HepG2 (cell line): ENCODE measurements at regions of chr2 and their contacts with region 1.

Region 1: DNA sequence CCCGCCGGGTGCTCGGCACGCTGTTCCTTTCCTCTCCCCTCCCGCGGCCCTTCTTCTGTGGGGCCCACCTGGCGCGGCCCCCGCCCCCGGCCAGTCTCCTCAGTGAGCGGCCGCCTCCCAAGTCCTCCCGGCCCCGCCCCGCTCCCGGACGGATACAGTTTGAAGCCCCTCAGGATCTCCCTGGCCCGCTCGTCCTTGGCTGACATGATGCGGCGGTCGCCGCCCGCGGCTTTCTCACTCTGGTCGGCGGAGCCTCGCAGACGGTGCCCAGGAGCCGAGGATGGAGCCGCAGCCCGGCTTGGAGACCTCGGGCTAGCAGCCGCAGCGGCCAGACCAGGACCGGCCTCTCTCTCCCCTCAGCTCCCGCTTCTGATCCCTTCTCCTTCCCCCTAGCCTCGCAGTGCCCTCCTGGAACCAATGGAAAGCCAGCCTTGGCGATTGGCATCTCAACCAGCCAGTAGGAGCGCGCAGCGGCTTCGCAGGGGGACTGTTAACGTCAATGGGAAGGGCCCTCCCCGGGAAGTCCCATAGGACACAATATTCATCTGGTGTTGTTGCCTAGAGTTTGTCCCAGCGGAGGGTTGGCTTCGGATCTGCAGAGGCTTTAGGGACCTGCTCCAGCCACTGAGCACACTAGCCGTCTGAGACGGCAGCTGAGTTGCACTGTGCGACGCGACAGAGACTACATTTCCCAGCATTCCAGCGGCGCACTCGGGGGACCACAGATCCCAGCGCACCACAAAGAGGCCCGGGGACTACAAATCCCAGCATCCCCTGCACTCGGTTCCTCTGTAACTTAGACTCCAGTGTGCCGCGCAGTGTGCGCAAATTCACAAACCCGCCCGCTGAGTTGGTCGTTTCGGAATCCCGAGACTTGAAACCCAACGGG is at the start of gene PDE6D:
- DNase-seq: peak; percentile 97
- ATAC-seq: peak; percentile 97
- H3K4me3 ChIP-seq: peak within 1 kb of the TSS; percentile 70 to 92 (median 88)
- H3K27ac ChIP-seq: peak within 1 kb of the TSS; percentile 65
- H3K4me1 ChIP-seq: peaks cover 51% of the 10 kb centered on the region
- H3K27me3 ChIP-seq: no peaks in the 10 kb centered on the region; a peak in 1 of 5 replicates
- CTCF ChIP-seq: peak; percentile 16
- EP300 ChIP-seq: no peak
- POLR2A ChIP-seq: peak; percentile 76 to 94
- RAD21 ChIP-seq: peak; percentile 29; the same call in 1 of the 2 replicates
- total RNA-seq, gene PDE6D: 14.1 and 22.6 TPM in 2 replicates

Region 2: GRCh38 chr2:231612179-231613053 is 168.7 kb before region 1 on chr2:
- CTCF ChIA-PET with region 1: interaction called, 3 read pairs
- POLR2A ChIA-PET with region 1: no interaction called
- in situ Hi-C with region 1: no loop called
- intact Hi-C with region 1: loop called (anchors 2 kb)
- DNase-seq: peak; percentile 80
- ATAC-seq: peak; percentile 72
- H3K4me3 ChIP-seq: peak overlapping the region in 1 of 3 experiments; percentile 45; a peak in 2 of 6 replicates
- H3K27ac ChIP-seq: peak overlapping the region; percentile 28
- H3K4me1 ChIP-seq: peaks cover 62% of the 10 kb centered on the region
- H3K27me3 ChIP-seq: peaks cover 3 to 8% of the 10 kb centered on the region in 2 experiments; a peak in 2 of 5 replicates
- CTCF ChIP-seq: peak; percentile 96
- EP300 ChIP-seq: no peak
- POLR2A ChIP-seq: no peak
- RAD21 ChIP-seq: peak; percentile 91

Region 3: DNA sequence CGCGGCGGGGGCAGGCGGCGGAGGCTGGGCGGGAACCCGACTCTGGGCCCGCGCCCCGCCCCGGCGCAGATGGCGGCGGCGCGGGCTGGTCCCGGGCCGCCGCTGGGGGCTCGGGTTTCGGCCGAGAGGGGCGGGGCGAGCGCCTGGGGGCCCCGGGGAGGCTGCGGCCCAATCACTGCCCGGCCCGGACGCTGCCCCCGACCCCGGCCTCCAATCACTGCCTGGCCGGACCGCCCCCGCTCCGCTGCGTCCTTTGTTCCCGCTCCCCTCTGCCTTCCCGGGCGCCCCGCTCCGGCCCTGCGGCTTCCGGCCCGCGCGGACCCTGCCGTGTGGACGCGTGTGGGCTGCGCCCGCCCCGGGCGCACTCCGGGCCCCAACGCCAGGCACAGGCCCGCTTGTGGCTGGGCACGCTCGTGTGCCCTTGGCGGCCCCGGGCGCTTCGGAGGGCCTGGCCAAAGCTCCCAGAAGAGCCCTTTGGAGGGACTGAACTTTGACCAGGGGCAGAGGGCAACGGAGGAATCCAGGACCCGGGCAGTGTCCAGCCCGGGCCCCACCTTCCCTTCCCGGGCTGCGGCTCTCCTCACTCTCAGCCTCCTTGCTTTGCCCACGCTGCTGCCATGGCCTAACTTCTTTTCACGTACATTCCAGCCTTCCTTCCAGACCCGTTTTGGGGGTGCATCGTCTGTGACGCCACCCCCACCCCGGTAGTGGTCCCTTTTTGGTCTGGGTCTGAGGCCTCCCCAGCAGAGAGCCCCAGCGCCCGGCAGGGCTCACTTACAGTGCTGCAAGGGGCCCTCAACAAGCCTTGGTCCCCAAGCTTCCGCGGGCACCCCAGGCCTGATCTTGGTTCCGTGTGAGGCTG is 99.9 kb before region 1 on chr2:
- CTCF ChIA-PET with region 1: interaction called, 3 read pairs
- POLR2A ChIA-PET with region 1: interaction called, 8 read pairs
- in situ Hi-C with region 1: no loop called
- intact Hi-C with region 1: loop called (anchors 2 kb)
- DNase-seq: peak; percentile 87
- ATAC-seq: peak; percentile 83
- H3K4me3 ChIP-seq: peak overlapping the region; percentile 63 to 82 (median 66)
- H3K27ac ChIP-seq: peak overlapping the region; percentile 98
- H3K4me1 ChIP-seq: peaks cover 64% of the 10 kb centered on the region
- H3K27me3 ChIP-seq: peaks cover 0 to 10% of the 10 kb centered on the region in 2 experiments; a peak in 1 of 5 replicates
- CTCF ChIP-seq: peak; percentile 11; the same call in 1 of the 2 replicates
- EP300 ChIP-seq: no peak; a peak in 1 of 4 replicates
- POLR2A ChIP-seq: peak in 1 of 2 experiments; percentile 93; a peak in 2 of 4 replicates
- RAD21 ChIP-seq: peak; percentile 77

Region 4: GRCh38 chr2:231720987-231721966 is 59.9 kb before region 1 on chr2:
- CTCF ChIA-PET with region 1: no interaction called
- POLR2A ChIA-PET with region 1: no interaction called
- in situ Hi-C with region 1: no loop called
- intact Hi-C with region 1: loop called (anchors 2 kb)
- DNase-seq: no peak
- ATAC-seq: peak; percentile 30
- H3K4me3 ChIP-seq: no peak overlapping the region
- H3K27ac ChIP-seq: no peak overlapping the region
- H3K4me1 ChIP-seq: peaks cover 38% of the 10 kb centered on the region
- H3K27me3 ChIP-seq: peaks cover 0 to 30% of the 10 kb centered on the region in 2 experiments; a peak in 2 of 5 replicates
- CTCF ChIP-seq: 0 out of 2 replicates have a peak, but pooled peaks have one; percentile 14
- EP300 ChIP-seq: no peak
- POLR2A ChIP-seq: no peak
- RAD21 ChIP-seq: no peak

Region 5: DNA sequence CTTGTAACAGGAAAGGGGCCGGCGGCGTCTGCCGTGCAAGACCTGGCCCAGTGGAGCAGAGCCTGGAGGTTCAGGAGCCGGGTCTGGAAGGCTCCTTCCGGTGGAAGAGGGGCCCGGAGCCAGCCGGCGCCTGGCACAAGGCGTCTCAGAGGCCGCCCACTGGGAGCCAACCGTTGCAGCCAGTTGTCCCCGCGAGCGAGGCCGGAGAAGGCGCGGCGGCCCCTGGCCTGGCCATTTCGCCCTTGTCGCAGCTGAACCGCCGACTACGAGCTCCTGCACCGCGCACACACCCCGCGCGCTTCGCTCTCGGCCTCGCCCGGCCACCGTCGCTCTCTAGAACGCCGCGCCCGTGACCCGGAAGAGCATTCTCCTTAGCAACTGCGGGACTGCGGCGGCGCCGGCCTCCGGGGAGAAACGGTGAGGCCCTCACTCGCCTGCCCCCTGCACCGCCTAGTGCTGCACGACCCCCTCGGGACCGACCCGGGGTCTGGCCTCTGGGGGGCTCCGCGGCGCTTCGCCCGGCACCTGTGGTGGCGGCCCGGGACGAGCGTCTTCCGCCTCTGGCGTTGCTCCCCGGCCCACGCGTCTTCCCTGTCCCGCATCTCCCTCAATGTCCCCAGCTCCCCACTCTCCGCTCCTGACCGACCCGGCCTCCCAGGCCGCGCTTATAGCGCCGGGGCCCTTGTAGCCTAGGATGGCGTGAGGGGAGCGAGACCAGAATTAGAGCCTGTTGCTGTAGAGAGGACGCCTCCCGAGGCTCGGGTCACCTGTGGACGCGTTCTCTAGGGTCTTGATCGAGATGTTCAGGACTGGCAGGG is 180.4 kb after region 1 on chr2 and contains the start of gene DIS3L2:
- CTCF ChIA-PET with region 1: no interaction called
- POLR2A ChIA-PET with region 1: no interaction called
- in situ Hi-C with region 1: no loop called
- intact Hi-C with region 1: no loop called
- DNase-seq: peak; percentile 81
- ATAC-seq: peak; percentile 93
- H3K4me3 ChIP-seq: peak within 1 kb of the TSS; percentile 88 to 97 (median 93)
- H3K27ac ChIP-seq: peak within 1 kb of the TSS; percentile 77
- H3K4me1 ChIP-seq: peaks cover 65% of the 10 kb centered on the region
- H3K27me3 ChIP-seq: no peaks in the 10 kb centered on the region
- CTCF ChIP-seq: peak; percentile 33
- EP300 ChIP-seq: no peak
- POLR2A ChIP-seq: peak; percentile 80 to 91
- RAD21 ChIP-seq: peak; percentile 78
- total RNA-seq, gene DIS3L2: 20.3 and 23.9 TPM in 2 replicates